HEK293T (cell line): ENCODE measurements at regions of chr7 and their contacts with region 1.

Region 1: GRCh38 chr7:14691597-14692203 is 210.9 kb downstream of the DGKB start:
- DNase-seq: no peak

Region 2: DNA sequence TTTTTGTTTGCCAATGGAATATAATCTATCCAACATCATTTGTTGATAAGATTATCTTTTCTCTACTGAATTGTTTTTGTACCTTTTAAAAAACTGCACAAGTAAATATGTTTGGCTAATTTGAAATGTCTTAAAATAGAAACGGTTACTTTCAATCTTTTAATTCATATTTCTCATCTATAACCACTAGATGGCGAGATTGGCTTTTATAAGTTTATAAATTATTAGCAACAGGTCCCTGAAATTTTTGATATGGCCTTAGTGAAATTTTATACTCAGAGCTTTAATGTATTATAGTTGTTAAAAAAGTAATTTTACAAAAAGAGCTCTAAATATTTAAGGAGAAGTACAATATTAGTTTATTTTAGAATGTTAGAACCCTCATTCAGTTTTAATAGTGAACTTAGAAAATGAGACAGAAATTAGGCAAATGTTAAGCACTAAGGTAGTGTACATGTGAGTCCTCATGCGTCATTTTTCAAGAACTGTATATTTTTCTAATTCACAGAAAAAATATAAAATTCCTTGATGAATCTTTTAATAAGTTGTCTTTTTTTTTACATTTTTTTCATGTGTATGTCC is 1411.8 kb before region 1 on chr7:
- CTCF ChIA-PET with region 1: interaction called, 25 read pairs
- POLR2A ChIA-PET with region 1: no interaction called
- DNase-seq: no peak

Region 3: GRCh38 chr7:14714161-14714728 is 22.5 kb after region 1 on chr7:
- CTCF ChIA-PET with region 1: no interaction called
- POLR2A ChIA-PET with region 1: no interaction called
- DNase-seq: no peak

Region 4: GRCh38 chr7:15168489-15168888 is 476.8 kb after region 1 on chr7:
- CTCF ChIA-PET with region 1: no interaction called
- POLR2A ChIA-PET with region 1: no interaction called
- DNase-seq: no peak